ENCODE measurements at regions of chr1 and their contacts with region 1.

Region 1: DNA sequence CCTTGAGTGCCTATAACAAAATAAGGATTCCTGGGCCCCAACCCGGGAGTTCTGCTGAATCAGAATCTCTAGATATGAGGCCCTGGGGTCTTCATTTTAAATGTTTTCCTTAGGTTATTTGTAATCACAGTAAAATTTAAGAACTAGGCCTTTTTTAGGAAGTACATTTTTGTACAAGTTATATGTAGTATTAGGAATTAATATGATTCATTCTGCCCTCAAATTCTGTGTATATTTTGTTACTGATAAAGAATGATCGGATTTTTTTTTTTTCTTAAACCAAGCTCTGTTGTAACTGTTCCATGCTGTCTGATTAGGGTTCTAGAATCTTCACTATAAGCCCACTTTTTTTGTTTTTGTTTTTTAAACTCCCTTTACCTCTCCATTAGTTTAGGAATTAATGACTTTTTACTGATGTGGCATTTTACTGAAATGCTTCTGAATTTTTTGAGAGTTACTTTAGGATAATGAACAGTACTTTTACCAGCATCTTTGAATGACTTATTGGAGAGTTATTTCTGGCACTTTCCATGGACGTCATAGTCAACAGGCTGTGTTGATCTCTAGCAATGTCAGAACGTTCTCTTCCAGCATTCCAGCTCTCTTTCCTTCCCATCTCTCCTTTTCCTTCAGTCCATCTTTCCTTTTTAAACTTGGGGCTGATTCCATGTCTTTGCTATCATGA is 48.3 kb downstream of the CLIC4 start:
- DNase-seq: peak; percentile 90
- ATAC-seq: peak; percentile 82
- H3K4me3 ChIP-seq: no peak overlapping the region; the same call in 1 of the 2 replicates
- H3K27ac ChIP-seq: peak overlapping the region; percentile 91; the same call in 1 of the 2 replicates
- H3K4me1 ChIP-seq: peaks cover 12% of the 10 kb centered on the region
- H3K27me3 ChIP-seq: no peaks in the 10 kb centered on the region
- CTCF ChIP-seq: no peak
- POLR2A ChIP-seq: no peak
- RAD21 ChIP-seq: no peak

Region 2: DNA sequence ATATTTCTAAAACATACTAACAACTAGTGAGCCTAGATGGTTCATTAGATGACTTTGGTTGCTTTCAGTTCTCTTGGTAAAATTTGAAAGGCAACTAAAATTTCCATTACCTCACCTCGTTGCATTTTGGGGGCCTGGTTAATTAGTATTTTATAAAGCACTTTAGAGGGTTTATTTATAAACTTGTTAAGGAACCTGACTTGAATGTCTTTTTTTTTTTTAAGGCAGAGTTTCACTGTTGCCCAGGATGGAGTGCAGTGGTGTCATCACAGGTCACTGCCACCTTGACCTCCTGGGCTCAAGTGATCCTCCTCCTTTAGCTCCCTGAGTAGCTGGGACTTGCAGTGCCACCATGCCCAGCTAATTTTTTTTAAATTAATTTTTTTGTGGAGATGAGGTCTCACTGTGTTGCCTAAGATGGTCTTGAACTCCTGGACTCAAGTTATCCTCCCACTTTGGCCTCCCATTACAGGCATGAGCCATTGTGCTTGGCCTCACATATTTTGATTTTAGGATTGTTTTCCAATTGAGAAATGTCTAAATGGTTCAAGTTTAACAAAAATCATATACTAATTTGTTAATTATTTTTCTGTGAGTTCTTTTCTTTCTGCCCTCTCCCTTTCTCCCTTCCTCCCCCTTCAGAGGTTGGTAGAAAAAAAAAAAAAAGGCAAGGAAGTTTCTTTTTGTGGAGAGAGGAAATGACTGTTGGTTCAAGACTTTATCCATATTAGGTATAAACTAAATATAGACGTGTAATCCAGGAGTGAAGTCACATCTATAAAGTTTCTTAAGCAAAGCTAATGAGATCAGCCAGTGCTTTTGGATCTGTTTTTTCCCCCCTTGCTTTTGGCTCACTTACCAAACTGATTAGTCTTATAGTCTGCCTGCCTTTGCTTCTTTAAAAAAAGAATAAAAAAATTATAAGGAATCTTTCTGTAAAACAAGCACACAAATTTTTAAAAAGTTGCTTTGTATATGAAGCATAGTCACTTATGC is 23.6 kb before region 1 on chr1:
- CTCF ChIA-PET with region 1: interaction called, 3 read pairs
- POLR2A ChIA-PET with region 1: no interaction called
- dilution Hi-C with region 1: no loop called
- in situ Hi-C with region 1: no loop called
- intact Hi-C with region 1: loop called (anchors 2 kb)
- DNase-seq: peak; percentile 98
- ATAC-seq: peak; percentile 65
- H3K4me3 ChIP-seq: no peak overlapping the region
- H3K27ac ChIP-seq: peak overlapping the region; percentile 98
- H3K4me1 ChIP-seq: peaks cover 20% of the 10 kb centered on the region
- H3K27me3 ChIP-seq: no peaks in the 10 kb centered on the region
- CTCF ChIP-seq: no peak
- POLR2A ChIP-seq: no peak; the same call in 1 of the 2 replicates
- RAD21 ChIP-seq: no peak

Region 3: DNA sequence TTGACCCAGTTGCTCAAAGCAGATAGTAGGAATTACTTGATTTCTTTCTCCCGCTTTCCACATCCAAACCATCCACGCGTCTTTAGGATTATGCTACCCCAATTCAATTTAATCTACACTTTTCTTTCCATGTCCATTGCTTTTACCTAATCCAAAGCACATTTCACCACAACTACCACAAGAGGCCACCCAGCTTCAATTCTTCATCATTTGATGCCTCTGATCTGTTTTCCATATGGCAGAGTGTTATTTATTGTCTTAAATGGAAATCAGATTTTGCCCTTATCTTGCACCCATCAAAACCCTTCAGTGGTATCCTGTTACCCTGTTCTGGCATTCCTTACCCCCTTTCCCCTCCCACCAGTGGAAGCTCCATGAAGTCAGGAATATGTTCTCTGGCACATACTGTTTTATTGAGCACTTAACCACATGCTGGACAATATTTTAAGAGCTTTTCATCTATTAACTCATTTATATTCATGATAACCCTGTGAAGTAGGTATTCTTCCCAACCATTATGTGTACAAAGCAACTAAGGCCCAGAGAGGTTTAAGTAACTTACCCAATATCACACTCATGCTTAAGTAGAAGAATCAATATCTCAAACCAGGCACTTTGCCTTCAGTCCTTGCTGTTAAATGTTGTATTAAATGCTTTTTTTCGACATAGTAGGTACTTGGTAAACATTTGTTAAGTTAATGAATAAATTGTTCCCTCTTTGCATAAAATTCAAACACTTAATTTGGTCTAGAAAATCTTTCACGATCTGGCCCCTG is 13.7 kb before region 1 on chr1:
- CTCF ChIA-PET with region 1: no interaction called
- POLR2A ChIA-PET with region 1: interaction called, 10 read pairs
- dilution Hi-C with region 1: no loop called
- in situ Hi-C with region 1: no loop called
- intact Hi-C with region 1: no loop called
- DNase-seq: no peak
- ATAC-seq: no peak
- H3K4me3 ChIP-seq: no peak overlapping the region
- H3K27ac ChIP-seq: no peak overlapping the region
- H3K4me1 ChIP-seq: peaks cover 4% of the 10 kb centered on the region; the same call in 1 of the 2 replicates
- H3K27me3 ChIP-seq: no peaks in the 10 kb centered on the region
- CTCF ChIP-seq: no peak; the same call in 1 of the 2 replicates
- POLR2A ChIP-seq: no peak
- RAD21 ChIP-seq: 0 out of 2 replicates have a peak, but pooled peaks have one; percentile 5